Endothelial cell of umbilical vein (primary cell): ENCODE measurements at regions of chr9 and their contacts with region 1.

Region 1: GRCh38 chr9:2158111-2158610 is 143.0 kb downstream of the SMARCA2 start:
- DNase-seq: peak; percentile 88
- H3K4me3 ChIP-seq: peak overlapping the region; percentile 23 to 76 (median 37)
- H3K27ac ChIP-seq: peak overlapping the region; percentile 79
- H3K4me1 ChIP-seq: peaks cover 26% of the 10 kb centered on the region
- H3K27me3 ChIP-seq: no peaks in the 10 kb centered on the region
- CTCF ChIP-seq: no peak
- POLR2A ChIP-seq: peak; percentile 44

Region 2: DNA sequence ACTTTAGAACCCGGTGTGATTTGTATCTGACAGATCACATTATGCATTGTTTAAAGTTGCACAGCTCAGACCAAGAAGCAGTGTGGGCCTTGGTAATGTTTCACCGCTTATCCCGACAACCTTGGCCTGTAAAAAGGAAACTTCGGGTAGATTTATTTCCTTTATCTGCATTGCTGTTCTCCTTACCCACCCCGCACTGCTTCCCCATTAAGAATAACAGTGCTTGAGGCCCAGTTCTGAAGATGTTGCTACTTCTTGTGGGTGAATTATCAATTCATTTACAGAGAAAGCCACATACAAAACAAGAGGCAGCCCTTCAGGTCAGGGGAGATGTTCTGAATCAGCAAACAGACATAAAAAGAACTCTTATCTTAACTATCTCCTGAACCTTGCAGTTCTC is 134.6 kb before region 1 on chr9:
- CTCF ChIA-PET with region 1: no interaction called
- POLR2A ChIA-PET with region 1: no interaction called
- dilution Hi-C with region 1: no loop called
- intact Hi-C with region 1: no loop called
- DNase-seq: peak; percentile 53
- H3K4me3 ChIP-seq: no peak overlapping the region
- H3K27ac ChIP-seq: no peak overlapping the region
- H3K4me1 ChIP-seq: peaks cover 53% of the 10 kb centered on the region
- H3K27me3 ChIP-seq: no peaks in the 10 kb centered on the region
- CTCF ChIP-seq: no peak
- POLR2A ChIP-seq: no peak

Region 3: GRCh38 chr9:2125906-2126305 is 32.3 kb before region 1 on chr9:
- CTCF ChIA-PET with region 1: interaction called, 11 read pairs
- POLR2A ChIA-PET with region 1: no interaction called
- dilution Hi-C with region 1: no loop called
- intact Hi-C with region 1: loop called (anchors 2 kb)
- DNase-seq: peak; percentile 52
- H3K4me3 ChIP-seq: peak overlapping the region in 1 of 3 experiments; percentile 48
- H3K27ac ChIP-seq: peak overlapping the region; percentile 34
- H3K4me1 ChIP-seq: peaks cover 41% of the 10 kb centered on the region
- H3K27me3 ChIP-seq: no peaks in the 10 kb centered on the region
- CTCF ChIP-seq: no peak
- POLR2A ChIP-seq: no peak

Region 4: GRCh38 chr9:2132484-2133082 is 25.6 kb before region 1 on chr9:
- CTCF ChIA-PET with region 1: interaction called, 15 read pairs
- POLR2A ChIA-PET with region 1: no interaction called
- dilution Hi-C with region 1: no loop called
- intact Hi-C with region 1: loop called (anchors 2 kb)
- DNase-seq: peak; percentile 42
- H3K4me3 ChIP-seq: no peak overlapping the region
- H3K27ac ChIP-seq: no peak overlapping the region
- H3K4me1 ChIP-seq: peaks cover 15% of the 10 kb centered on the region
- H3K27me3 ChIP-seq: no peaks in the 10 kb centered on the region
- CTCF ChIP-seq: peak; percentile 40 to 48
- POLR2A ChIP-seq: no peak

Region 5: DNA sequence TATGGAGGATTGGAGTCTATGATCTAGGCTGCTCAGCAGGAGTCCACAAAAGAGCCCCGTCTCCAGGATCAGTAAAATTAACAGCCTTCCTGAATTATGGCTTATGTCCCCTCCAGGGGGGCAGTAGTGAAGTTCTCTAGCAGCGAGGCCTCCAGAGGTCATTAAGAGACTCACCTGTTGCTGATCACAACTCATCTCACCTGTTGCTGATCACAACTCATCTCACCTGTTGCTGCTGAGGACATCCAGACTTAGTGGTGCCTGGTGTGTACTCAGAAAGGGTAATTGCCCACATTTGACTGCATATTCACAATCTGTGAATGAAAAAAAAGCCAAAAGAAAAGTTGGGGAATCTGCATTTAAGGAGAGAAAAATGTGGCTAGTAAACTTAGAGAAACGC is 13.5 kb before region 1 on chr9:
- CTCF ChIA-PET with region 1: interaction called, 18 read pairs
- POLR2A ChIA-PET with region 1: no interaction called
- dilution Hi-C with region 1: no loop called
- intact Hi-C with region 1: no loop called
- DNase-seq: no peak
- H3K4me3 ChIP-seq: no peak overlapping the region
- H3K27ac ChIP-seq: no peak overlapping the region
- H3K4me1 ChIP-seq: no peaks in the 10 kb centered on the region
- H3K27me3 ChIP-seq: no peaks in the 10 kb centered on the region
- CTCF ChIP-seq: no peak
- POLR2A ChIP-seq: no peak

Region 6: DNA sequence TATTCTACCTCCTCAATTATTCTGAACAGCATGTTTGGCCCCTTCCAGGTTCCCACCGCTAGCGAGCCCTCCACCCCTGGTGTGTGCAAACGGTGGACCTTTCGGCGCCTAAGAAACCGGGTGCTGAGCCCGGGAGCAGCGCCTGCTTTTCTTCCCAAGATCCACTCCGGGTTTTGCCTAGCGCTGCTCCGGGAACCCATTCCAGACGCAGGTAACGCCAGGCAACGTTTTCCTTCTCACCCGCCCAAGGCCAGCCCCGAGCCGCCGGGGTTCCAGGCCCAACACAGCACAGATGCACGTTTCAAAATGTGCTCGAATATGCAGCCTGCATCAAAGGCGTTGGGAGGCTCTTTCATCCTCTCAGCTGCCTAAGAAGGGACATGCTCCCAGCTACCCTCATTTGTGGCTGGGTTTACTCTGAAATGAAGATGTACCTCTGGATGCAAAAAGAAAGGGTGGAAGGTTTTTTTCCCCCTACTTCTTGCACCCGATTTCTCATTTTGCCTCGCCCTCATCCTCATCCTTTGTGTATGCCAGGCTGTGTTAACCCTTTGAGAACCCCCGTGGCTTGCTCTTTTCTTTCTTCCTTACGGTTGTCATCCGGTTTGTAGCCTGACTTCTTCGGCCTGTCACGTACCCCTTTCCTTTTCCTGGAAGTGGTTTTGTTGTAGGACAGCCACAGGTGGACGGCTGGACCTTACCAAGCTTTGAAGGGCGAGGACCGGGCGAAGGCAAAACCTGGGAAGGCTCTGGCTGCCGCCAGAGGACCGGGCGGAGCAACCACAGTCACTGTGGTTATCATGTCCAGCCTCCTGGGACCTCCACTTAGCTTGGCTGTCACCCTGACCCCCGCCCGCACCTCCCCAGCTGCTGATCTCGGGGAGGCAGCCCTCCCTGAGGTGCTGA is 83.9 kb after region 1 on chr9:
- CTCF ChIA-PET with region 1: interaction called, 6 read pairs
- POLR2A ChIA-PET with region 1: no interaction called
- dilution Hi-C with region 1: no loop called
- intact Hi-C with region 1: loop called (anchors 1 kb)
- DNase-seq: peak; percentile 87
- H3K4me3 ChIP-seq: peak overlapping the region; percentile 31 to 67 (median 36)
- H3K27ac ChIP-seq: no peak overlapping the region
- H3K4me1 ChIP-seq: peaks cover 14% of the 10 kb centered on the region
- H3K27me3 ChIP-seq: peaks cover 0 to 2% of the 10 kb centered on the region in 2 experiments
- CTCF ChIP-seq: no peak
- POLR2A ChIP-seq: peak; percentile 77

Region 7: DNA sequence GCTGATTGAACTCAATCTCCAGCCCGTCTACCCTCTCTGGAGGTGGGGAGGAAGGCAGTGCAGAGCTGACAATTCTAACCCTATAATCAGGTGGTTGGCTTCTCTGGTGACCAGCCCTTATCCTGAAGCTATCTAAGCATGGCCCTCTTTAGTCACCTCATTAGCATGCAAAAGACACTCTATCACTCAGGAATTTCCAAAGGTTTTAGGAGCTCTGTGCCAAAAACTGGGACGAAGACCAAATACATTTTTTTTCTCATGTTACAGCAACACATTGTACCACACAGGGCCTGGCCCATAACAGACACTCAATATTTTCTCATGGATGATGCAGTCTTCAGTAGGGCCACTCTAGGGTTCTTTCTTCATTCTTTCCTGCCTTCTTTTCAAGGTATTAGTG is 344.6 kb after region 1 on chr9:
- CTCF ChIA-PET with region 1: no interaction called
- POLR2A ChIA-PET with region 1: no interaction called
- dilution Hi-C with region 1: no loop called
- intact Hi-C with region 1: no loop called
- DNase-seq: no peak
- H3K4me3 ChIP-seq: no peak overlapping the region
- H3K27ac ChIP-seq: no peak overlapping the region
- H3K4me1 ChIP-seq: no peaks in the 10 kb centered on the region
- H3K27me3 ChIP-seq: peaks cover 6 to 7% of the 10 kb centered on the region in 2 experiments
- CTCF ChIP-seq: no peak
- POLR2A ChIP-seq: no peak

Region 8: GRCh38 chr9:2620919-2621679 is 462.9 kb after region 1 on chr9:
- CTCF ChIA-PET with region 1: no interaction called
- POLR2A ChIA-PET with region 1: no interaction called
- dilution Hi-C with region 1: no loop called
- intact Hi-C with region 1: loop called (anchors 10 kb)
- DNase-seq: peak; percentile 58
- H3K4me3 ChIP-seq: peak overlapping the region; percentile 2 to 42 (median 42)
- H3K27ac ChIP-seq: no peak overlapping the region
- H3K4me1 ChIP-seq: peaks cover 13% of the 10 kb centered on the region
- H3K27me3 ChIP-seq: peaks cover 38 to 57% of the 10 kb centered on the region in 2 experiments
- CTCF ChIP-seq: no peak
- POLR2A ChIP-seq: no peak

Region 9: DNA sequence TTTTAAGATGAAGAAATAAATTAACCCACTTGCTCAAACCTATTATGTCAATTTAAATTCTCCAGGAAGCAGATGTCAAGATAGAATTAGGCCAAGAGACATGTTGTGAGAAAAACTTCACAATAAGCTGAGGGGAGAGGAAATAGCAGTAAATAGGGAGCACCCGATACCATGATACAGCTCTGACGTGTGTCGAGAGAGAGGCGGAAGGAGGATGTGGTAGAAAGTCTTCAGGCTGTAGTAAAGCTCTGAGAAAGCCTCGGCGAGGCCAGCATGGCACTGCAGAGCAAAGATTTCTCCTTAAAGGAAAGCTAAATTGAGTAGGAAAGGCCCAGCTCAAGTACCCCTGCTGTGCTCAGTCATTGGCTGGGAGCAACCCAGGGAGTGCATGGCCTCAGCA is 691.8 kb after region 1 on chr9:
- CTCF ChIA-PET with region 1: no interaction called
- POLR2A ChIA-PET with region 1: no interaction called
- dilution Hi-C with region 1: no loop called
- intact Hi-C with region 1: loop called (anchors 2 kb)
- DNase-seq: no peak
- H3K4me3 ChIP-seq: no peak overlapping the region
- H3K27ac ChIP-seq: no peak overlapping the region
- H3K4me1 ChIP-seq: peaks cover 6% of the 10 kb centered on the region
- H3K27me3 ChIP-seq: peaks cover 0 to 3% of the 10 kb centered on the region in 2 experiments
- CTCF ChIP-seq: no peak
- POLR2A ChIP-seq: no peak